Activated T-helper 1 cell treated with anti-CD3 and anti-CD28 coated beads, Interleukin-12 subunit alpha, Interleukin-12 subunit beta, Interleukin-2, Interleukin-4 antibody, amounts not matched to agents 30 ng/mL and 10 ng/mL and 1 ng/mL, durations not matched to agents 14 hours and 24 hours and 36 hours (primary cell): ENCODE measurements at regions of chr16 and their contacts with region 1.

Region 1: DNA sequence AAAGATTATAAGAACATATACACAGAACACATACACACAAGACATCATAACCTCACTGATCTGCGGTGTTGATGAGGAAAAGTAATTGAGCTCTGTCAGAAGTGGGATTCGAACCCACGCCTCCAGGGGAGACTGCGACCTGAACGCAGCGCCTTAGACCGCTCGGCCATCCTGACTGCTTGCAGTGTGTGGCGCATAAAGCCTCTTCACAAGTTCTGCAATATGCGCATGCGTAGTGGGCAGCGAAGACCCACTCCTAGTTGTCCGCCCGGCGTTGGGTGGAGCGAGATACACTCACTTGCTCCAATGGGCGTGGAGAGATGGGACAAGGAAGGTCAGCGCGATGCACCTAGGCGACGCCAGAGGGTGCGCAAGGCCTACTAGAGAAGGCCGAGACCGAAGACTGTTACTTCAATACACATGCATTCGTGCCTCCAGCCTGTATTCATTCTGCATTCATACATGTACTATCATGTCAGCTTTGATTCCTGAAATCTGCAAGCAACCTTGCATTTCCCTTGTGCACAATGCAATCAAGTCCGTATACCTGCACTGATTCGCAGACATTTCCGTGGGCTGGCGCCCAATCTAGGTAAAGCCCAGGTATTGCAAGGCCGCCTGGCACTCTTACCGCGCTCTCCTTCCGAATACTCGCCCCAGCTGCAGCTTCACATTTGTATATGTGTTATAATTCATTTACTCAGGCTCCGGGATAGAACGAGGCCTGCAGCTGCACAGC is 16.1 kb upstream of the PLLP start:
- DNase-seq: peak; percentile 99
- H3K4me3 Mint-ChIP-seq: no peak overlapping the region
- H3K27ac Mint-ChIP-seq: no peak overlapping the region
- H3K4me1 Mint-ChIP-seq: peaks cover 18% of the 10 kb centered on the region
- H3K27me3 Mint-ChIP-seq: peaks cover 7% of the 10 kb centered on the region

Region 2: GRCh38 chr16:57084257-57084770 is 216.2 kb before region 1 on chr16:
- intact Hi-C with region 1: loop called (anchors 1 kb)
- DNase-seq: peak; percentile 64
- H3K4me3 Mint-ChIP-seq: no peak overlapping the region
- H3K27ac Mint-ChIP-seq: peak overlapping the region; percentile 71
- H3K4me1 Mint-ChIP-seq: peaks cover 8% of the 10 kb centered on the region
- H3K27me3 Mint-ChIP-seq: no peaks in the 10 kb centered on the region

Region 3: DNA sequence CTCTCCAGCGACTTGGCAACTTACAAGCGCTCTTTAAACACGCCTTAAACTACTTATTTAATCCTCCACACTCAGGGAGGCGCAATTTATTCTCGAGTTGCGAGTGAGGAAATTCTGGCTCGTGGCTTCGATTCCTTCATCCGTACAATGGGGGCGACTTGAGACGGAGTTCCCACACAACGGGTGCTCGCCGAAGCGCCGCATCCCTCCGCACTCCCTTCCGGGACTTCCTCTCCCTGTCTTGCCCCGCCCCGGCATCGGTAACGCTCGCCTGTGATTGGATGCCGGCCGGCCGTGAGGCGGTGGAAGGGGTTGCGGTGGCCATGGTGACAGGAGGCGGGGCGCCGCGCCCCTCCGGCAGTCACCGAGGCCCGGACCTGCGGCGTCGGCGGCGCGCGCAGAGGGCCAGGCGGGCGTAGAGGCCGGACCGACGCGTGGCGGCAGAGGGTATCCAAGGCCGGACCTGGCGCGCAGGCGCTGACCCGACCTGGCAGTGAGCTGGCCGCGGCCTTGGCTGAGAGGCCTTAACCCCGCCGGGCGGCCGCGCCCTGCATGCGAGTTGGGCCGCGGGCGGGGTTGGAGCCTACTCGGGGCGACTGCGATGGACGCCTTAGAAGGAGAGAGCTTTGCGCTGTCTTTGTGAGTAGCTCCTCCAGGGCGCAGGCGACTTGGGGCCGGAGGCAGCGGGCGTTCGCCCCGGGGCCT is 55.6 kb before region 1 on chr16 and contains the start of gene ARL2BP:
- intact Hi-C with region 1: loop called (anchors 1 kb)
- DNase-seq: peak; percentile 98
- H3K4me3 Mint-ChIP-seq: peak within 1 kb of the TSS; percentile 90
- H3K27ac Mint-ChIP-seq: peak within 1 kb of the TSS; percentile 82
- H3K4me1 Mint-ChIP-seq: peaks cover 18% of the 10 kb centered on the region
- H3K27me3 Mint-ChIP-seq: no peaks in the 10 kb centered on the region
- total RNA-seq, gene ARL2BP: 29.1 and 29.7 TPM in 2 replicates

Region 4: GRCh38 chr16:57341441-57342303 is 41.1 kb after region 1 on chr16:
- intact Hi-C with region 1: no loop called
- DNase-seq: no peak
- H3K4me3 Mint-ChIP-seq: no peak overlapping the region
- H3K27ac Mint-ChIP-seq: no peak overlapping the region
- H3K4me1 Mint-ChIP-seq: peaks cover 15% of the 10 kb centered on the region
- H3K27me3 Mint-ChIP-seq: peaks cover 14% of the 10 kb centered on the region

Region 5: GRCh38 chr16:57377080-57377841 is 76.7 kb after region 1 on chr16:
- intact Hi-C with region 1: loop called (anchors 1 kb)
- DNase-seq: peak; percentile 3
- H3K4me3 Mint-ChIP-seq: no peak overlapping the region
- H3K27ac Mint-ChIP-seq: peak overlapping the region; percentile 74
- H3K4me1 Mint-ChIP-seq: peaks cover 17% of the 10 kb centered on the region
- H3K27me3 Mint-ChIP-seq: no peaks in the 10 kb centered on the region

Region 6: DNA sequence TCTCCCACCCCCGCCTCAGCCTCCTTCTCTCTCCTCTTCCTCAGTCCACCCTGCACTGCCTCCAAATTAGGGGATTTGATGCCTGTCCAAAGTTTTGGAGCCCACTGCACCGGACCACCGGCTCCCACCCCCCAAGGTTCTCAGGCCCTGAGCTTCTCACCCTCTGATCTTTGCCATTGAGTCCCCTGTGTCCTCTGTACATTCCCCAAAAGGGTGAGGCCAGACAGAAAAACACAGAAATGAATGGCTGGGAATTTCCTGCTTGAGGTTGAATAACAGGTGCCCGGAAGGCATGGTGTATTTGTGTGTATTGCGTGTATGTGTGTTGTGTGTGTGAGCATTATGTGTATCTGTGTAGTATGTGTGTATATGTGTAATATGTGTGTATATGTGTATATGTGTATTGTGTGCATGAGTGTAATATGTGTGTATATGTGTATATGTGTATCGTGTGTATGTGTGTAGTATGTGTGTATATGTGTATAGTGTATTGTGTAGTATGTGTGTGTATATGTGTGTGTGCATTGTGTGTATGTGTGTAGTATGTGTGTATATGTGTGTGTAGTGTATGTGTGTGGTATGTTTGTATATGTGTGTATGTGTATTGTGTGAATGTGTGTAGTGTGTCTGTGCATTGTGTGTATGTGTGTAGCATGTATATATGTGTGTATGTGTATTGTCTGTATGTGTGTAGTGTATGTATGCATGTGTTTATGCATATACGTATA is 88.0 kb after region 1 on chr16:
- intact Hi-C with region 1: no loop called
- DNase-seq: no peak
- H3K4me3 Mint-ChIP-seq: no peak overlapping the region
- H3K27ac Mint-ChIP-seq: peak overlapping the region; percentile 11
- H3K4me1 Mint-ChIP-seq: no peaks in the 10 kb centered on the region
- H3K27me3 Mint-ChIP-seq: peaks cover 9% of the 10 kb centered on the region

Region 7: DNA sequence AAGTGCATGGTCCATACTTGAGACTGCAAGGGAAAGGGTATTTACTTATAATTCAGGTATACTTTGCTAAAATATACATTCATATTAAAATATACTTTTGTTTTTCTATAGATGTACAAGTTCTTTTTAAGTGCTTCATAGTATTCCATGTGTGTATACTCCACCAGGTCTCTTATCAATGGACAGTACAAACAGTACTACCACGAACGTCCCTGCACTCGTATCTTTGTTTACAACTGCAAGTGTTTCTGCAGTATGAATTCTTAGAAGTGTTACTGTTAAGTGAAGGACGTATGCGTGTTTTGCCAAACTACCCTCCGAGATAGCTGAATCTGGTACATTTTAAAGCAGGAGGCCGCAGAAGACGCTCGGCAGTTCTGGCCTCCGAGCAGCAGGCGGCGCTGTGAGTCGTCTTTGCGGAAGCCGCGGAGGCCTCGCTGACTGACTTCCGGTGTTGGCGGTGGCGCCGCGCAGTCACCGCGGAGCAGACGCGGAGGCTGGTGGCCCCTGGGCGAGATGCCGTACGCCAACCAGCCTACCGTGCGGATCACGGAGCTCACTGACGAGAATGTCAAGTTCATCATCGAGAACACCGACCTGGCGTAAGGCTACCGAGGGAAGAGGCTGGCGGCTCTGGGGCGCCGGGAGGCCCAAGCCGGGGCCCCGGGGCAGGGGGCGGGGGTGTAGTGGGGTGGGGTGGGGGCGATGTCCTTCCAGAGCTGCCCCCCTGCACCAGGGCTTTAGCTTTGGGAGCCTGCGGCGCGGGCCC is 161.8 kb after region 1 on chr16 and contains the start of gene POLR2C:
- intact Hi-C with region 1: loop called (anchors 1 kb)
- DNase-seq: peak; percentile 89
- H3K4me3 Mint-ChIP-seq: peak within 1 kb of the TSS; percentile 100
- H3K27ac Mint-ChIP-seq: peak within 1 kb of the TSS; percentile 99
- H3K4me1 Mint-ChIP-seq: peaks cover 43% of the 10 kb centered on the region
- H3K27me3 Mint-ChIP-seq: no peaks in the 10 kb centered on the region
- total RNA-seq, gene POLR2C: 89.2 and 90.9 TPM in 2 replicates

Region 8: DNA sequence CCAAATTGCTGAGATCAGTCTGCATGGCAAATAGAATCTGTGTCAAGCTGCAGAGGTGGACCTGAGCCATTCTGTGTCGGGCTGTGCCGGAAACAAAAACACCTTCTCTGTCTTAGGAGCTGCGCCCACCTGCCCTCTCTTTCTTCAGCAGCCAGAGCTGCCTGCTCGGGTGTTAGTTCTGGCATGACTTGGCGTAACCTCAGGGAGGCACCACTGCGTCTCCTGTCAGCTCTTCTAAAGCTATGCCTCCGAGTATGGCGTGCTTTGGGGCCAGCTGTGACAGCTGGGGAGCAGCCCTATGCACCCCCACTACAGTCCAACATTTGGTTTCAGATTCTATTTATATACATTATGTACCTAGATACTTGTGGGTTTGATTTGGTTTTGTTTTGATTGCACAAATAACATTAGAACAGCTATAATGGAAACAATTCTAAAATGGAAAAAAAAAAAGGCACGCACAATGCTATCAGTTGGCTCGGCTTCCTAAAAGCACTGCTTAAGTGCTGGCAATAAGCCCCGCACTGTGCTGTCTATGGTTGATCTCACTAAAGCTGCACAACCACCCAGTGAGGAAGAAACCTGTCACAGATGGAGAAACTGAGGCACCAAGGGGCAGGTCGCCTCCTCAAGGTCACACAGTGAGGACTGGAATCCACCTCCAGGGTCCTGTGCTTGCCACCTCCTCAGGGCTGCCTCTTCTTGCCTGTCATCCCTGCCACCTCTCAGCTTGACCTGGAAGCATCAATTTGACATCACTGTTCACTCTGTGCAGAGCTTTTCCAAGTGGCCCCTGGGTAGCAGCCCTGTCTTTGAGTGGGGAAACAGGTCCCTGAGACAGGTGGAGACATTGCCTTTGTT is 309.2 kb after region 1 on chr16:
- intact Hi-C with region 1: loop called (anchors 5 kb)
- DNase-seq: peak; percentile 74
- H3K4me3 Mint-ChIP-seq: peak overlapping the region; percentile 69
- H3K27ac Mint-ChIP-seq: peak overlapping the region; percentile 99
- H3K4me1 Mint-ChIP-seq: peaks cover 68% of the 10 kb centered on the region
- H3K27me3 Mint-ChIP-seq: no peaks in the 10 kb centered on the region